ENCODE measurements at regions of chr11 and their contacts with region 1.

Region 1: DNA sequence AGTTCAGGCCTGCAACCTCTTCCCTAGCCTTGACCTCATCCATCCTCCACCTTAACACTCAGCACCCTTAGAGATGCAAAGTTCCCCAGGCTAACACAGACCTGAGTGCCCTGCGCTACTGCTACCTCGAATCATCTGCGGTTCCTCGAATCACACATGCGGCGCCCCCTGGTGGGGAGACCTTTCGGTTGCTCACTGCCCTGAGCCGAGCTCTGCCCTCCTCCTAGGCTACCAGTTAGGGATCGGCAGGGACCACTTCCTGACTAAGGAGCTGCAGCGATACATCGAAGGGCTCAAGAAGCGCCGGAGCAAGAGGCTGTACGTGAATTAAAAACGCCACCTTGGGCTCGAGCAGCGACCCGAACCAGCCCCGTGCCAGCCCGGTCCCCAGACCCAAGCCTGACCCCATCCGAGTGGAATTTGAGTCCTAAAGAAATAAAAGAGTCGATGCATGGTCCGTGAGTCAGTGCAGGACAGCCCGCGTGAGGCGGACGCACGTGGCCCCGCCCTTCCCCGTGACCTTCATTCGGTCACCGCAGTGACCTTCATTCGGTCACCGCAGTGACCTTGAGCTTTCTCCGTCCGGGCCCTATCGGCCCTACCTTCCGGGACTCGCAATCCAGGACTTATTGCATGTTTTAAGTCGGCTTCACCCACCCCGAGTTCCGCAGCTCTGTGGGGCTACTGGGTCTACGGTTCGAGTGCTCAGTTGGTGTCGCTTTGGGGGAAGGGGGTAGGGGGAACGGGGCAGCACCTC is 830 bp upstream of the ESRRA start:
- DNase-seq: peak; percentile 80
- ATAC-seq: peak; percentile 48
- H3K4me3 ChIP-seq: peak overlapping the region; percentile 59 to 70
- H3K27ac ChIP-seq: peak overlapping the region; percentile 99
- H3K4me1 ChIP-seq: peaks cover 12 to 55% of the 10 kb centered on the region in 2 experiments; a peak in 3 of 4 replicates
- H3K27me3 ChIP-seq: no peaks in the 10 kb centered on the region
- CTCF ChIP-seq: peak in 2 of 3 experiments; percentile 89 to 95; a peak in 4 of 6 replicates
- POLR2A ChIP-seq: peak; percentile 70
- RAD21 ChIP-seq: no peak

Region 2: DNA sequence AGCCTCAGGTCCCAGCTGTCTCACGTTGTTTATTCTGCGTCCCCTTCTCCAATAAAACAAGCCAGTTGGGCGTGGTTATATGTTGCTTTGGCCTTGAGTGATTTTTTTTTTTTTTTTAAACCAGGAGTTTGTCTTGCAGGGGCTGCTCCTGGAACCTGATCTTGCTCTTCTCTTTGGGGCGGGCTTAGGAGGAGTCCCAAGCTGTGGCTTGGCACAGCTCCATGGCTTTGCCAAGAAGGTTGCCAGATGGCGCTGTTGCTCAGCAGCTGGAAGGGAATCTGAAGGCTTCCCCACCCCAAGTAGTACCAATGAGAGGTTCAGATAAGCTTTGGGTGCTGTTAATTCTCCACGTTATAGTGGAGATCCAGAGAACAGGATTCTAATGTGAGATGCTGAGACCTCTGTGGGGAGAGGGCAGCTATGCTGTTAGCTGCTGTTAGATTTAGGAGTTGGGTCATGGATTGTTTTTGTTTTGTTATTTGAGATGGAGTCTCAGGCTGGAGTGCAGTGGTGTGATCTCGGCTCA is 100.0 kb before region 1 on chr11:
- CTCF ChIA-PET with region 1: interaction called, 80 read pairs
- POLR2A ChIA-PET with region 1: interaction called, 8 read pairs
- RAD21 ChIA-PET with region 1: interaction called, 4 to 7 read pairs
- intact Hi-C with region 1: loop called (anchors 1 kb)
- DNase-seq: peak; percentile 88
- ATAC-seq: peak; percentile 80
- H3K4me3 ChIP-seq: no peak overlapping the region
- H3K27ac ChIP-seq: no peak overlapping the region
- H3K4me1 ChIP-seq: peaks cover 0 to 8% of the 10 kb centered on the region in 2 experiments; a peak in 1 of 4 replicates
- H3K27me3 ChIP-seq: no peaks in the 10 kb centered on the region
- CTCF ChIP-seq: peak; percentile 75 to 90 (median 87)
- POLR2A ChIP-seq: no peak
- RAD21 ChIP-seq: peak; percentile 94

Region 3: DNA sequence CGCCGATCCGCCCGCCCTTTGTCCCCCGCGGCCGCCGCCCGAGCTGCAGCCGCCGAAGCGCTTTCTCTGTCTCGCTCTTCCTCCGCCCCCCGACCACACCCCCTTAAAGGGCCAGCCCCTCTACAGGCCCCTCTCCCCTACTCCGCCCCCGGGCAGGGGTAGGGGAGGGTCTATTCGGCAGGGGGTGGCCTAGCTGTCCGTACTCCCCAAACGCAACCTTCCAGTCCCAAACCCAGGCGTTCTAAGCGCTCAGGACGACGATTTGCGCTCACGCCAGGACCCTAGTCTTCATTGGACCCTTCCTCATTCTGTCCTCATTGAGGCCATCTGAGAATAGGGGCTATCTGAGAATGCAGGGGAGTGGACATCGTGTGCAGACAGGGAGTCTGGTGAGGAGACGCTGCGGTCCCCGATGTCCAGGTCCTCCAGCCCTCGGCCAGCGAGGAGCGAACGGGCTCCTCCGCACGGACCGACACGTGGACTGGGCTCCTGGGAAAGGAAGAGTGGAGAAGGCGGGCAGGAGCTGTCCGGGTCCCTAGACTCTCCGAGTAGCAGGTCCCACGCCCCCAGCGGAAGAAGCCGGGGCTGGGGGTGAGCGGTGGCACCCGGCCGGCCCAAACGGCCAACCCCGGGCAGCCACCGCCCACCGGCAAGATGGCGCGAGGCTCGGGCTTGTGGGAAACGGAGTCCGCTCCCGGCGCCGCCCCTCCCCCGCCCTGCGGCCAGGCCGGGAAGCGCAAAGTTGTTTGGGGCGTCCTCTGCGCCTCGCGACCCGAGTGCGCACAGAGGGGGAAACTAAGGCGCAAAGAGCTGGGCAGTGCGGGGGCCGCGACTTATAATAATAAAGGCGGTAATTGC is 57.4 kb before region 1 on chr11 and contains the start of gene PPP1R14B:
- CTCF ChIA-PET with region 1: interaction called, 11 read pairs
- POLR2A ChIA-PET with region 1: interaction called, 6 read pairs
- RAD21 ChIA-PET with region 1: no interaction called
- intact Hi-C with region 1: loop called (anchors 2 kb)
- DNase-seq: no peak
- ATAC-seq: peak; percentile 50
- H3K4me3 ChIP-seq: peak within 1 kb of the TSS; percentile 99 to 100
- H3K27ac ChIP-seq: peak within 1 kb of the TSS; percentile 94
- H3K4me1 ChIP-seq: peaks cover 36 to 76% of the 10 kb centered on the region in 2 experiments
- H3K27me3 ChIP-seq: no peaks in the 10 kb centered on the region
- CTCF ChIP-seq: no peak
- POLR2A ChIP-seq: peak; percentile 42
- RAD21 ChIP-seq: no peak
- total RNA-seq, gene PPP1R14B: 332 TPM

Region 4: GRCh38 chr11:64284048-64284961 is 20.2 kb before region 1 on chr11 and contains the start of gene BAD:
- CTCF ChIA-PET with region 1: interaction called, 22 read pairs
- POLR2A ChIA-PET with region 1: interaction called, 5 read pairs
- RAD21 ChIA-PET with region 1: no interaction called
- intact Hi-C with region 1: no loop called
- DNase-seq: peak; percentile 82
- ATAC-seq: peak; percentile 87
- H3K4me3 ChIP-seq: peak within 1 kb of the TSS; percentile 77 to 80
- H3K27ac ChIP-seq: peak within 1 kb of the TSS; percentile 83
- H3K4me1 ChIP-seq: peaks cover 14 to 27% of the 10 kb centered on the region in 2 experiments
- H3K27me3 ChIP-seq: no peaks in the 10 kb centered on the region
- CTCF ChIP-seq: no peak
- POLR2A ChIP-seq: peak; percentile 23
- RAD21 ChIP-seq: no peak
- total RNA-seq, gene BAD: 51.9 TPM

Region 5: DNA sequence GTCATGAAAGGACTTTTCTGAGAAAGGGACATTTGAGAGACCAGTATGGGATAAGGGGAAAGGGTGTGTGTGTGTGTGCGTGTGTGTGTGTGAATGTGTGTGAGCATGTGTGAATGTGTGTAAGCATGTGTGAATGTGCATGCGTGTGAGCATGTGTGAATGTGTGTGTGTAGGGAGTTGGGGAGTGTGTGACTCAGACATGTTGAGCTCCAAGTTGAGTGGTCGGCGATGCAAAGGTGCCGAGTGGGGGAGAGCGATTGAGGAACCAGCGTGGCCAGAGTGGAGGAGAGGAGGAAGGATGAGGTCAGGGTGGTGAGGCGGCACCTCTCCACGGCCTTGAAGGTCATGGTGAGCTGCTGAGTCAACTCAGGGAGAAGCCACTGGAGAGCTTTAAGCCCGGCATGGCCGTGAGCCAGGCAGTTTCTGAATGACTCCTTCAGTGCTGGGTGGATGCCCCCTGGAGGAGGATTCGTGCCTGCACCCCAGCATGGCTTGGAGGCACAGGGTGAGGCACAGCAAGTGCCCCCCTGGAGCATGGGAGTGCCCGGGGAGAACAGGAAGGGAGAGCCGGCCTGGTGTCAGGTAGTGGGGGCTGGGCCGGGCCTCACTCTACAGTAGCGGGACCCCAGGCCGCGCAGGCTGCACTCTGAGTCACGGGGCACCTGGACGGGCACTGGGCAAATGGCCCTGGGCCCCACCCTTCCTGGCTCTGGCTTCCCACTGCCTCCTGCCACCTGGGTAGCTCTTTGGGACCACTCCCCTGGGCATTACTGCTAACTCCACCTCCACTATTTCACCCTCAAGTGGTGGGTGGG is 27.3 kb after region 1 on chr11:
- CTCF ChIA-PET with region 1: interaction called, 19 read pairs
- POLR2A ChIA-PET with region 1: interaction called, 4 read pairs
- RAD21 ChIA-PET with region 1: interaction called, 3 to 4 read pairs
- intact Hi-C with region 1: no loop called
- DNase-seq: peak; percentile 83
- ATAC-seq: peak; percentile 74
- H3K4me3 ChIP-seq: peak overlapping the region; percentile 19 to 37
- H3K27ac ChIP-seq: peak overlapping the region; percentile 68
- H3K4me1 ChIP-seq: peaks cover 29 to 53% of the 10 kb centered on the region in 2 experiments
- H3K27me3 ChIP-seq: no peaks in the 10 kb centered on the region
- CTCF ChIP-seq: peak in 2 of 3 experiments; percentile 74 to 89; a peak in 4 of 6 replicates
- POLR2A ChIP-seq: peak; percentile 43
- RAD21 ChIP-seq: no peak

Region 6: DNA sequence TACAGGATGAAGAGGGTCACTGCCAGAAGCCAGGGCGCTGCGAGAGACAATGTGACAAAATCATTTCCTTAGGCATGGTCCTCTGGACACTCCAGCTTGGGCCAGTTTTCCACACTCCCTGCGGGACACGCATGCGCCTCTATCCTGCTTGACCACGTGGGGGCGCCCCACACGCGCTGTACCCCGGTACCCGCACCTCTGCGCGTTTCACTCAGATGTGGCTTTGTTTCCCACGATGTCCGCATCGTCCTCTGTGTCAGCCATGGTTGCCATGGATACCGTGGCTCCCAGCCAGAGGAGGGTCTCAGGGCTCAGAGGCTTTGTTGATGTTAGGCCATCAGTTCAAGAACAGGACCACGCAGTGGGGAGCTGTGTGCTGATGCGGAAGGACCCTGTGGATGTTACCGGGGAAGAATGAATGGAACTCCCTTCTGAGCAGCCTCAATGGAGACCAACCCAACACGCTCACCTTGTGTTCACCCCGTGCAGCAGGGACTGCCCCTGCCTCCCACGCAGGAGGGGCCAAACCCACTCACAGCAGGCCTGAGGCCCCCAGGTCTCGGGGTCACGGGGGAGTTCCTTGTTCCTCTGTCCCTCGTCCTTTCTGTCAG is 185.4 kb after region 1 on chr11:
- CTCF ChIA-PET with region 1: no interaction called
- POLR2A ChIA-PET with region 1: no interaction called
- RAD21 ChIA-PET with region 1: no interaction called
- intact Hi-C with region 1: no loop called
- DNase-seq: peak; percentile 29
- ATAC-seq: peak; percentile 99
- H3K4me3 ChIP-seq: no peak overlapping the region
- H3K27ac ChIP-seq: no peak overlapping the region
- H3K4me1 ChIP-seq: no peaks in the 10 kb centered on the region
- H3K27me3 ChIP-seq: peaks cover 31% of the 10 kb centered on the region
- CTCF ChIP-seq: peak; percentile 76 to 91 (median 81); a peak in 5 of 6 replicates
- POLR2A ChIP-seq: no peak
- RAD21 ChIP-seq: peak; percentile 92

Measured in HCT116 (cell line).